MCF 10A (cell line): ENCODE measurements at regions of chr11 and their contacts with region 1.

Region 1: GRCh38 chr11:8964324-8965320 is at the start of gene TMEM9B:
- DNase-seq: peak; percentile 92
- H3K4me3 Mint-ChIP-seq: peak within 1 kb of the TSS; percentile 85
- H3K27ac Mint-ChIP-seq: peak within 1 kb of the TSS; percentile 72
- H3K4me1 Mint-ChIP-seq: peaks cover 20% of the 10 kb centered on the region
- H3K27me3 Mint-ChIP-seq: no peaks in the 10 kb centered on the region
- CTCF ChIP-seq: no peak
- total RNA-seq, gene TMEM9B: 30.0 and 35.3 TPM in 2 replicates

Region 2: DNA sequence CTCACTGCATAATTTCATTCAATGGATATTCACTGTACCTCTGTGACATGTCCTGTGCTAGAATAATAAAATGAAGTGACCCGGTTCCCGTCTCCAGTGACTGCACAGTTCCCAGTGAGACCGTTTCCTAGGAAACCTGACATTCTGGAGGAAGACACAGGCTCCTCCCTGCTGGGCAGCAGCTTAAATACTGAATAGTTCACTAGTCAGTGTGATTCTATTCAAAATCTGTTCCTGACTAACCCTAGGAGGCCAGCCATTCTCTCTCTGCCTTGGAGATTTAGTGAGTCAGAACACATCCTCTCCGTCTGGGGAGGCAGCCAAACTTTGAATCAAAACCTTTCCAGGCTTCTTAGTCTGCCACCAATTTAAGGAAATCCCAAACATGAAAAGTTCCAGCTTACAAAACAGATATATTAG is 293.4 kb before region 1 on chr11:
- CTCF ChIA-PET with region 1: interaction called, 4 read pairs
- POLR2A ChIA-PET with region 1: interaction called, 3 read pairs
- intact Hi-C with region 1: loop called (anchors 5 kb)
- DNase-seq: peak; percentile 87
- H3K4me3 Mint-ChIP-seq: peak overlapping the region; percentile 21
- H3K27ac Mint-ChIP-seq: peak overlapping the region; percentile 91
- H3K4me1 Mint-ChIP-seq: peaks cover 15% of the 10 kb centered on the region
- H3K27me3 Mint-ChIP-seq: no peaks in the 10 kb centered on the region
- CTCF ChIP-seq: no peak

Region 3: DNA sequence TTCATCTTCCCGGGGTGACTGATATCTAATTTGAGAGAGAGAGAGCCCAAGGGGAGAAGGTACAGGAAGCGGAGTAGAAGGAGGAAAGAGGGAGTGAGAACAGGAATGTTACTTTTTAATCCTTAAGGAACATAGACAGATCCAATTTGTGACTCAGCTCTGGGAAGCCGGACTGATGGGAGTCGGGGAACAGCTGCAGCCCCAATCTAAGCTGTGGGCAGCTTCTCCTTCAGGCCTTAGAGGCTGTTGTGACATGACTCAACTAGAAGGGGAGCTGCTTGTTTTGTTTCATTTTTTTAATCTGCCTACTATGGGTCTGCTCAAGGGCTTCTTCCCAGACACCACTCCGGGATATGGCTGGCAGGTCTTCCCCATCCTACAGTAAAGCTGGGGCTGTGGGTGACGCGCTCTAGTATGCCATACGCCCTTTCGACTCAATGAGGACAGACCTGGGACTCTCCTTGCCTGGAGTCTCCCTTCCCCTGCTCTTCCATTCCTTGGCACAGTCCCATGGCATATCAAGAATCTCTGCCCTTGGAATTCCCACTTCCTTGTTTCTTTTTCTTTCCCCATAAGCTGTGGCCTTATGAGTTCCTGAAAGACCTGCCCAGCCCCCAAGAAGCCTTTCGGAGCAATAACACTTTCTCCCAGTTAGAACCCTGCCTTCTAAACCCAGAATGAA is 156.9 kb before region 1 on chr11:
- CTCF ChIA-PET with region 1: interaction called, 15 read pairs
- POLR2A ChIA-PET with region 1: interaction called, 25 read pairs
- intact Hi-C with region 1: no loop called
- DNase-seq: peak; percentile 70
- H3K4me3 Mint-ChIP-seq: peak overlapping the region; percentile 80
- H3K27ac Mint-ChIP-seq: peak overlapping the region; percentile 83
- H3K4me1 Mint-ChIP-seq: peaks cover 37% of the 10 kb centered on the region
- H3K27me3 Mint-ChIP-seq: no peaks in the 10 kb centered on the region
- CTCF ChIP-seq: no peak

Region 4: DNA sequence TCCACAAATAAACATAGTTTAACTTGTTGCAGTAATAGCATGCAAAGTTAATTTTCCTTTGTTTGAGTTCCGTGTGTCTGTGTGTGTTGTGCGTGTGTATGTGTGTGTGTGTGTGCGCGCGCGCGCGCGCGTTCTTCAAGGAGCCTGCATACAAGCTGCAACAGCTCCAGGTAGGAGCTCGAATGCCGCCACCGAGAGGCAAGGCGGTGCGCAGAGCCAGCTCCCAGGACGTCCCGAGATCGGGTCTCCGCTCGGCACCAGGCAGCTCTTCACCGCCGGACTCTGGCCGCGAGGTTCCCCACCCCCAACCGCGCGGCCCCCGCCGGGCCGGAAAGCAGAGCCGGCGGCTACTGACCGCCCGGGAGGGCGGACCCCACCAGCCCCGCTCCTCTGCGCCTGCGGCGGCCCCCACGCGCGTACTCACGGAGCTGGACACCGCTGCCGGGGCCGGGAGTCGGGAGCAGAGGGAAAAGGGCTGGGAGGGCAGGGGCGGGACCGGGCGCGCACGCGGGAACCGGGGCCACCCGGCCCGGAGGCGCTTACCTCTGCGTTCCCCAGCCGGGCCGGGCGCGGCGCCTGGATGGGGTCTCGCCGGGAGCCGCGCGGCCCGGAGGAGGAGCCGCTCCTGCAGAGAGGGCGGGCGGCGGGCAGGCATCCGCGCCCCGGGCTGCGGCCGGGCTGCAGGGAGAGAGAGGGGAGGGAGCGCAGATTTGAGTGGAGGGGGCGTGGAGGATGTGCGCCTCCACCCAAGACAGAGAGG is 94.0 kb before region 1 on chr11:
- CTCF ChIA-PET with region 1: interaction called, 10 read pairs
- POLR2A ChIA-PET with region 1: interaction called, 4 read pairs
- intact Hi-C with region 1: no loop called
- DNase-seq: peak; percentile 59
- H3K4me3 Mint-ChIP-seq: peak overlapping the region; percentile 78
- H3K27ac Mint-ChIP-seq: no peak overlapping the region
- H3K4me1 Mint-ChIP-seq: peaks cover 10% of the 10 kb centered on the region
- H3K27me3 Mint-ChIP-seq: no peaks in the 10 kb centered on the region
- CTCF ChIP-seq: no peak

Region 5: DNA sequence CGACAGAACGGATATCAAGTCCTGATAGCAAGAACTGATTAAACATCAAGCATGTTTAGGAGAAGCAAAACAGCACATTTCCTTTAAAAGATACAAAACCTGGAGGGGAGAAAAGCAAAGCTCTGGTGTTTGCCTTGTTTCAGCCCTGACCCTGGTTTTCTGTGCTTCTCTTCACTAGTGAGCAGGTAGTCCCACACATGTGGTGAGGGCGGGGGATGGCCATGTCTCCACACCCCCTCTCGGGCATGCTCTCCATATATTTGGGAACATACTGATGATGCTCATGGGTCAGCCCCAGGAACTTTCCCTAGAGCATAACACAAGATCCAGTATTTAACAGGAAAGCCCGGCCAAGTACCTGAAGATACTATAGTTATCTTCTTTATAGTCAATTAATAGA is 41.9 kb before region 1 on chr11:
- CTCF ChIA-PET with region 1: interaction called, 155 read pairs
- POLR2A ChIA-PET with region 1: interaction called, 12 read pairs
- intact Hi-C with region 1: no loop called
- DNase-seq: no peak
- H3K4me3 Mint-ChIP-seq: no peak overlapping the region
- H3K27ac Mint-ChIP-seq: no peak overlapping the region
- H3K4me1 Mint-ChIP-seq: peaks cover 8% of the 10 kb centered on the region
- H3K27me3 Mint-ChIP-seq: no peaks in the 10 kb centered on the region
- CTCF ChIP-seq: no peak

Region 6: DNA sequence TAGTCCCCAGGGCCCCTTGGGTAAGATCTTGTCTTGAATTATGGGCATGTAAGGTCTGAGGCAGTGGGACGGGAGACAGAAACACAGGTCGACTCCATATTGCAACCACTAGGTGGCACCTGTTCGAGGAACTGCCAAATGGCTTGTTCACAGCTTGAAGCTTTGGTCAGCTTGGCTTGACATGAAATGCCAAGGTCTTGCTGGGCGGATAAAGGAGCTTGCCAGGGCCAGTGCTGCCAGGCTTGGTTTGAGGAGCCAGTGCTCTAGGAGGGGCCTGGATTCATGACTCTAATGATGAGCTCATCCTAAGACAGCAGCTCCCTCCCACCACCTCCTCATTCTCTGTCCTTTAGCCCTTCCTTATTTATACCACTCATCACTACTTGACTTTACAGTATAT is 51.1 kb after region 1 on chr11:
- CTCF ChIA-PET with region 1: no interaction called
- POLR2A ChIA-PET with region 1: no interaction called
- intact Hi-C with region 1: no loop called
- DNase-seq: peak; percentile 79
- H3K4me3 Mint-ChIP-seq: no peak overlapping the region
- H3K27ac Mint-ChIP-seq: no peak overlapping the region
- H3K4me1 Mint-ChIP-seq: no peaks in the 10 kb centered on the region
- H3K27me3 Mint-ChIP-seq: no peaks in the 10 kb centered on the region
- CTCF ChIP-seq: peak; percentile 65

Region 7: DNA sequence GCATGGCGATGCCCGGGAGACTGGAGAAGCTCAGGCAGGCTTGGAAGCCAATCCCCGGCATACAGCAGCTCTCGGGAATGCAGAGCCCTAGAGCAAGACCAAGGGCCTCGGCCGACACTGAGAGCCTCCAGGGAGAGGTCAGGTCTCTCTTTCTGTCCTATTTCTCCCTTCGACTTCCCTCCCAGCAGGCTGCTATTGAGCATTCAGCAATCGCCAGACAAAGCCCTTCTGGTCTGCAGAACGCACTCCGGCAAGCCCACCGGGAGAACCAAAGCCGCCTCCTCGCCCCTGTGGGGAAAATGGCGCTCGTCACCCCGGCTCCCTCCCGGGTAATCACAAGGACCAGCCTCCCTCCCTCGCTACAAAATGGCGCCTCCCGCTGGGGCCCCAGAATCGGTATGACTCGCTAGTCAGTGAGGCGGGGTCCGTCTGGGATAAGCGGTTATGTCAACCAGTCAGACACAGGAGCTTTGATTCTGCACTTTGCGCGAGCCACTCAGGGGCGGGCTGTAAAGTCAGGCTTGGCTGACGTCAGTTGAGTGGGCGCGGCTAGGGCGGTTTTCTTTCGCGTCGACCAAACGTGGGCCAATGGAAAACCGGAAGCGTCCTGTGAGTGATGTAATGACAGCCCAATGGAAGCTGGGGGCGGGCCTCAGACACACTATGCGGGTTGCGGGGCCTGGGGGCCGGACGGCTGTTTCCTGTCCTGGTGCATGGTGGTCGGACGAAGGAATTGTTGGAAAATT is 495.9 kb after region 1 on chr11 and contains the start of gene ZNF143:
- CTCF ChIA-PET with region 1: no interaction called
- POLR2A ChIA-PET with region 1: interaction called, 15 read pairs
- intact Hi-C with region 1: no loop called
- DNase-seq: peak; percentile 100
- H3K4me3 Mint-ChIP-seq: peak within 1 kb of the TSS; percentile 88
- H3K27ac Mint-ChIP-seq: peak within 1 kb of the TSS; percentile 98
- H3K4me1 Mint-ChIP-seq: peaks cover 10% of the 10 kb centered on the region
- H3K27me3 Mint-ChIP-seq: no peaks in the 10 kb centered on the region
- CTCF ChIP-seq: no peak
- total RNA-seq, gene ZNF143: 19.0 and 25.2 TPM in 2 replicates